K562 (cell line): ENCODE measurements at regions of chr13 and their contacts with region 1.

Region 1: GRCh38 chr13:21470785-21471184 is 11.7 kb upstream of the ZDHHC20 start:
- DNase-seq: no peak
- ATAC-seq: no peak
- H3K4me3 ChIP-seq: no peak overlapping the region
- H3K27ac ChIP-seq: no peak overlapping the region
- H3K4me1 ChIP-seq: no peaks in the 10 kb centered on the region; a peak in 1 of 5 replicates
- H3K27me3 ChIP-seq: no peaks in the 10 kb centered on the region
- CTCF ChIP-seq: no peak
- EP300 ChIP-seq: no peak
- POLR2A ChIP-seq: no peak
- RAD21 ChIP-seq: no peak

Region 2: DNA sequence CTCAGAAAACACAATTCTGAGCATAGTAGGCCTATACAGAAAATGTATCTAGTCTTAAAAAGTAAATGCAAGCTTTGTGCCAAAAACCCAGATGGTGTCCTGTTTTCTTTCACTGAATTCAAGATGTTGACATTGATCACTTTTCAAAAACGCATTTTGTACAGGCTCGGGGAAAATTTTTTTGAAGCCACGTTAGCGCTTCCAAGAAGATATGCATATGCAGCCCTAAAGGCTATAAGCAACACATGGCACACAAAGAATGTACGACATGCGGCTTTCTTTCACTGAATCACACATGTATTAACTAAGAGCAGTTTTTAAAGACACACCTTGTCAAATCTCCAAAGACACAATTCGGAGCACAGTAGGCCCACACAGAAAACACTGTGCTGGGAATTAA is 178.9 kb before region 1 on chr13:
- CTCF ChIA-PET with region 1: no interaction called
- POLR2A ChIA-PET with region 1: no interaction called
- in situ Hi-C with region 1: loop called (anchors 5 kb)
- intact Hi-C with region 1: no loop called
- DNase-seq: no peak
- ATAC-seq: no peak
- H3K4me3 ChIP-seq: no peak overlapping the region
- H3K27ac ChIP-seq: no peak overlapping the region
- H3K4me1 ChIP-seq: no peaks in the 10 kb centered on the region; a peak in 1 of 5 replicates
- H3K27me3 ChIP-seq: peaks cover 0 to 5% of the 10 kb centered on the region in 2 experiments; a peak in 3 of 5 replicates
- CTCF ChIP-seq: no peak
- EP300 ChIP-seq: no peak
- POLR2A ChIP-seq: no peak
- RAD21 ChIP-seq: no peak